MCF 10A (cell line): ENCODE measurements at regions of chr3 and their contacts with region 1.

Region 1: GRCh38 chr3:63961891-63962290 is 49.7 kb upstream of the SCAANT1 start:
- DNase-seq: peak; percentile 76
- H3K4me3 Mint-ChIP-seq: no peak overlapping the region
- H3K27ac Mint-ChIP-seq: no peak overlapping the region
- H3K4me1 Mint-ChIP-seq: peaks cover 13% of the 10 kb centered on the region
- H3K27me3 Mint-ChIP-seq: no peaks in the 10 kb centered on the region
- CTCF ChIP-seq: peak; percentile 52

Region 2: GRCh38 chr3:63911873-63912767 is 49.8 kb before region 1 on chr3 and contains the start of gene SCAANT1:
- CTCF ChIA-PET with region 1: interaction called, 6 read pairs
- POLR2A ChIA-PET with region 1: interaction called, 17 read pairs
- intact Hi-C with region 1: loop called (anchors 5 kb)
- DNase-seq: peak; percentile 92
- H3K4me3 Mint-ChIP-seq: peak within 1 kb of the TSS; percentile 77
- H3K27ac Mint-ChIP-seq: peak within 1 kb of the TSS; percentile 91
- H3K4me1 Mint-ChIP-seq: no peaks in the 10 kb centered on the region
- H3K27me3 Mint-ChIP-seq: no peaks in the 10 kb centered on the region
- CTCF ChIP-seq: no peak
- total RNA-seq, gene SCAANT1: not detected in 2 replicates

Region 3: DNA sequence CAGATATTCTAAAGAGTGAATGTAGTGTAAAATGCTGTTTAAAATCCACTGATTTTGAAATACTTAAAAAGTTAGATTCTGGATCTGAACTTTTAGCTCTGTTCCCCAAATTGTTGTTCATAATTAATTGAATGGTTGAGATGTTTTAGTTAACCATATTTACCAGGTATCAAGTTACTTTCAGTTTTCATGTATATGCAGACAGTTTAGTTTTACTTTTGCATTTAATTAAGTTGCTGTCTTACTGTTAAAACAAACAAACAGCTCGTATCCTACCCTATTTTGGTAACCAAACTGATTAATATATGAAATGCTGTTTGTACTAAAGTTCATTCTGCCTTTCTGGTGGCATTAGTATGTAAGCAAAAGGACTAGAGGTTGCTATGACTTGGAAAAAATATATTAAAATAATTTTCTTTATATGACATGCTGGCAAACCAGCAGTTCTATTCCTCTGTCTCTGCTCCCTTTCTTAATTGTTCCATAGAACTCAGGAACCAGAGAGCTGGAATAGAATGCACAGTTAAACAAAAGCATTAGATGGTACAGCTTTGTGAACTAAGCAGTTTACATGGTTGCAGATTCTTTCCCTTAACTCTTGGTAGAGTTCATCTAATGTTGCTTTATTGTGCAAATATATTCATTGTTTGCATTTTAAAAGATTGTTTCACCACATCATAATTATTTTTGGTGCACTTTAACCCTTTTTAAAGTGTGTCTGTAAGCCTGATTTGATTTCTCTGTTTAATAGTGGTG is 10.2 kb before region 1 on chr3:
- CTCF ChIA-PET with region 1: interaction called, 15 read pairs
- POLR2A ChIA-PET with region 1: interaction called, 3 read pairs
- intact Hi-C with region 1: no loop called
- DNase-seq: no peak
- H3K4me3 Mint-ChIP-seq: no peak overlapping the region
- H3K27ac Mint-ChIP-seq: no peak overlapping the region
- H3K4me1 Mint-ChIP-seq: peaks cover 14% of the 10 kb centered on the region
- H3K27me3 Mint-ChIP-seq: no peaks in the 10 kb centered on the region
- CTCF ChIP-seq: no peak

Region 4: DNA sequence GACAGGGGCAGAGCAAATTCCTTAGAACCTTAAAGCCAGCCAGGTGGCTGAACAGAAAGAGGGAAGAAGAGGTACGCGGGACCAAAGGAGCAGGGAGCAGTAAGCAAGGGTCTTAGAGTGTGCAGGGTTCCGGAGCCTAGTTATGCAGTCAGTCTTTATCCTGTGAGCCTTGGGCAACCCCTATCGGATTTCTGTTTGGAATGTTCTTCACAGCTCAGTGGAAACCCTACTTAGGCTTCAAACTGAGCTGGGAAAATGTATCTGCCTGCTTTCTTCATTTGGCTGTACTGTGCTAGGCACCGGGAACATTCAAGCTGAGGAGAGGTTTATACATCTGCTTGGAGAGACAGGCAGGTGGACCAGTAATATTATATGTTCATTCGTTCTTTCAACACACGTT is 24.3 kb after region 1 on chr3:
- CTCF ChIA-PET with region 1: interaction called, 359 read pairs
- POLR2A ChIA-PET with region 1: interaction called, 283 read pairs
- intact Hi-C with region 1: no loop called
- DNase-seq: no peak
- H3K4me3 Mint-ChIP-seq: no peak overlapping the region
- H3K27ac Mint-ChIP-seq: peak overlapping the region; percentile 20
- H3K4me1 Mint-ChIP-seq: no peaks in the 10 kb centered on the region
- H3K27me3 Mint-ChIP-seq: no peaks in the 10 kb centered on the region
- CTCF ChIP-seq: no peak

Region 5: DNA sequence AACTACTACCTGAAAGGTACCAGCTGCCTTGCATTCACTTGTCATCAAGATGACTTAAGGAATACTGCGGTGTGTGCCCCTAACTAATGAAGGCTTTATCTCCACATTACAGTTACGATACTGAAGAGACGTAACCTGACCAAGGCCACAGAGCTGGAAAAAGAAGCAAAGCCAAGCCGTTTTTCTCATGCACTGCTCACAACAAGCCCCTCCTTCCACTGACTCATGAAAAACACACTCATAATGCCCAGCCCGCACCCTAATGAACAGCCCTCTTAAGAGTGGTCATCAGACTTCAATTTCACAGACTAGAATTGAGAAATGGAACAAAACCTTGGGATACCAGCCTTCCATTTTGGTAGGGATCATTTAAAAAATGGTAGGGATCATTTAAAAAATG is 49.8 kb after region 1 on chr3:
- CTCF ChIA-PET with region 1: interaction called, 11 read pairs
- POLR2A ChIA-PET with region 1: interaction called, 5 read pairs
- intact Hi-C with region 1: no loop called
- DNase-seq: peak; percentile 44
- H3K4me3 Mint-ChIP-seq: no peak overlapping the region
- H3K27ac Mint-ChIP-seq: no peak overlapping the region
- H3K4me1 Mint-ChIP-seq: peaks cover 18% of the 10 kb centered on the region
- H3K27me3 Mint-ChIP-seq: no peaks in the 10 kb centered on the region
- CTCF ChIP-seq: no peak

Region 6: GRCh38 chr3:64311424-64311976 is 349.6 kb after region 1 on chr3:
- CTCF ChIA-PET with region 1: no interaction called
- POLR2A ChIA-PET with region 1: no interaction called
- intact Hi-C with region 1: no loop called
- DNase-seq: peak; percentile 22
- H3K4me3 Mint-ChIP-seq: no peak overlapping the region
- H3K27ac Mint-ChIP-seq: no peak overlapping the region
- H3K4me1 Mint-ChIP-seq: no peaks in the 10 kb centered on the region
- H3K27me3 Mint-ChIP-seq: no peaks in the 10 kb centered on the region
- CTCF ChIP-seq: no peak